Panc1 (cell line): ENCODE measurements at regions of chr15 and their contacts with region 1.

Region 1: DNA sequence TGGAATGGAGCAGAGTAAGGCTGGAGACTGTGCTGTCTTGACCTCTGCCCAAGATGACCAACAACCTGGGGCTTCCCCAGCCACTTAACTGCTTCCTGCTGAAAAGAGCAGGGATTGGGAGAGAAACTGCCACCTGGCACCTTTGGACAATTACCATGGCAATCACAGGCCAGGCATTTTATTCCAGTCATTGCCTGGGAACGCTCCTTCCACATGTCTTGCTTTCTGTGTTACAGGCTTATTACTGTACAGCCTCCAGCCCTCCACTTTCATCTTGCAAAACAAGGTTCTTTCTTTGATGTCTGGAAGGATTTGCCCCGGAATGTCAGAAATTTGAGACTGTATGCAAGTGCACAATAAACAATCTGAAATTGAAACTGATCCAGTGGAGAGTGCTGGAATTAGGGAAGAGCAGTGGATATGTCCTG is 2.8 kb downstream of the PPP1R14D start:
- DNase-seq: no peak
- ATAC-seq: peak; percentile 72
- H3K4me3 ChIP-seq: no peak overlapping the region
- H3K27ac ChIP-seq: peak overlapping the region; percentile 53
- H3K4me1 ChIP-seq: peaks cover 29% of the 10 kb centered on the region
- H3K27me3 ChIP-seq: no peaks in the 10 kb centered on the region
- CTCF ChIP-seq: no peak

Region 2: GRCh38 chr15:40756893-40757297 is 68.8 kb before region 1 on chr15:
- CTCF ChIA-PET with region 1: no interaction called
- POLR2A ChIA-PET with region 1: interaction called, 11 read pairs
- in situ Hi-C with region 1: no loop called
- intact Hi-C with region 1: no loop called
- DNase-seq: no peak
- ATAC-seq: no peak
- H3K4me3 ChIP-seq: no peak overlapping the region
- H3K27ac ChIP-seq: no peak overlapping the region
- H3K4me1 ChIP-seq: peaks cover 17% of the 10 kb centered on the region
- H3K27me3 ChIP-seq: no peaks in the 10 kb centered on the region
- CTCF ChIP-seq: no peak

Region 3: GRCh38 chr15:40873625-40874561 is 48.2 kb after region 1 on chr15 and contains the start of gene RHOV:
- CTCF ChIA-PET with region 1: no interaction called
- POLR2A ChIA-PET with region 1: no interaction called
- in situ Hi-C with region 1: no loop called
- intact Hi-C with region 1: no loop called
- DNase-seq: no peak
- ATAC-seq: peak; percentile 94
- H3K4me3 ChIP-seq: peak within 1 kb of the TSS; percentile 51 to 59
- H3K27ac ChIP-seq: no peak within 1 kb of the TSS
- H3K4me1 ChIP-seq: peaks cover 4% of the 10 kb centered on the region; the same call in 1 of the 2 replicates
- H3K27me3 ChIP-seq: no peaks in the 10 kb centered on the region
- CTCF ChIP-seq: no peak; the same call in 1 of the 2 replicates
- total RNA-seq, gene RHOV: 4.2 TPM